H1 (cell line): ENCODE measurements at regions of chr19 and their contacts with region 1.

Region 1: DNA sequence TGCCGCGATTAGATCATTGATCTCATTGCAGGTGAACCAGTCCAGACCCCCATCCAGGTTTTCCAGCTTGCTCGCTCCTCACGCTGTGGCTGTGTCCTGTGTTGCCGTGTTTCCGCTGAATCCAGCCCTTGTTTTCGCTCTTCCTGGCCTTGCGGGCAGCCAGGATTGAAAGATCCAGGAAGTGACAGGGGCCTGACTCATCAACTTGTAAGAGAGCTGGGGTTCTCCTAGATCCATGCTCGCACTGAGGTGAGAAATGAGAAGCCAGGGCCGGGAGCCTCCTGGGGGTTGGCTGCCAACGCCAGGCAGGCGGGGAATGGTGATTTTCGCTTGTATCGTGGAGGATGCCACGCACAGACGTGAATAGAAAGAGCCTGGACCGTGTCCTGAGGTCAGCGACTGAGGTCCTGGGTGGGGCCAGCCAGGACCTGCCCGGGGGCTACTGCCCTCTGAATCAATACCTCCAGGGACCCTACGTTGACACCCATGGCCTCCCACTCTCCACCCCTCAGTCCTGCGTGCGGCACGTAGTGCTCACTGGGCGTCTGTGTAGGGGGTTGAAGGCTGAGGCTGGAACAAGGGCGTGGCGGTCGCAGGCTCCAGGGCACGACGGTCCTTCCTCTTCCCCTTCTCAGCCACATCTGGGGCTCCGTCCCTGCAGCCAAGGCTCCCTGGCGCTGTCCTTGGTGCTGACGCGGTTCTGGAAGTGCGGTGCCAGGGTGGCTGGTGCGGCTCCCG is 7.3 kb upstream of the PTPRH start:
- DNase-seq: peak; percentile 84 to 96
- H3K4me3 ChIP-seq: peak overlapping the region; percentile 56 to 83 (median 74)
- H3K27ac ChIP-seq: no peak overlapping the region
- H3K4me1 ChIP-seq: peaks cover 0 to 6% (median 2%) of the 10 kb centered on the region in 4 experiments; a peak in 1 of 7 replicates
- H3K27me3 ChIP-seq: no peaks in the 10 kb centered on the region
- CTCF ChIP-seq: no peak
- EP300 ChIP-seq: peak in 1 of 2 experiments; percentile 86; a peak in 2 of 3 replicates
- POLR2A ChIP-seq: peak in 1 of 2 experiments; percentile 51; a peak in 1 of 3 replicates
- RAD21 ChIP-seq: peak; percentile 24 to 37; a peak in 2 of 4 replicates

Region 2: DNA sequence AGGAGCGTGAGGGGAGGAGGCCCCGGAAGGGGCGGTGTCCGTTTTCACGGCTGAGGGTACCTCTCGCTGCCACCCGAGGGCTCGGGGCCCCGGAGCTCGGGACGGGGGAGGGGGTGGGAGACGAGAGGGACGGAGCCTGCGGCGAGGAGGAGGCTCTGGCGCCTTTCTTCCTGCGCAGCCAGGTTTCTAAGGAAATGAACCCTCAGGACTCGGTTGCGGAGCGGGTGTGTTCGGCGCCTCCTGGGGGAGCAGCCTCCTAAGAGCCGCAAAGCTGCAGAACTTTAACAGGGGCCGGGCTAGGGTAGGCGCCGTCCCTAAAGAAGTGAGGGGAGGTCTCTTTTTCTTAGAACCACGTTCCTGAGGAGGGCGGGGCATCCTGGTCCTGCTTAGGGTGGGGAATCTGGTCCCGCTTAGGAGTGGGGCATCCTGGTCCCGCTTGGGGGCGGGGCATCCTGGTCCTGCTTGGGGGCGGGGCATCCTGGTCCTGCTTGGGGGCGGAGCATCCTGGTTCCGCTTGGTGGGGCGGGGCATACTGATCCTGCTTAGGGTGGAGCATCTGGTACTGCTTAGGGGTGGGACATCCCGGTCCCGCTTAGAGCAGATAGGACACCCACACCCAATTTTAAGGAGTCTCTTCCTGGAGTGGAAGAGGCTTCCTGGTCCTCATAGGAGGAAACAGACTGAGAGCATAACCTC is 42.8 kb before region 1 on chr19:
- CTCF ChIA-PET with region 1: interaction called, 5 read pairs
- POLR2A ChIA-PET with region 1: interaction called, 16 read pairs
- DNase-seq: peak in 1 of 2 experiments; percentile 99
- H3K4me3 ChIP-seq: peak overlapping the region; percentile 60 to 77 (median 73)
- H3K27ac ChIP-seq: no peak overlapping the region
- H3K4me1 ChIP-seq: peaks cover 5 to 21% (median 14%) of the 10 kb centered on the region in 4 experiments
- H3K27me3 ChIP-seq: peaks cover 2 to 51% (median 28%) of the 10 kb centered on the region in 4 experiments; a peak in 6 of 7 replicates
- CTCF ChIP-seq: peak in 1 of 3 experiments; percentile 0; a peak in 1 of 4 replicates
- EP300 ChIP-seq: no peak
- POLR2A ChIP-seq: no peak
- RAD21 ChIP-seq: no peak

Region 3: DNA sequence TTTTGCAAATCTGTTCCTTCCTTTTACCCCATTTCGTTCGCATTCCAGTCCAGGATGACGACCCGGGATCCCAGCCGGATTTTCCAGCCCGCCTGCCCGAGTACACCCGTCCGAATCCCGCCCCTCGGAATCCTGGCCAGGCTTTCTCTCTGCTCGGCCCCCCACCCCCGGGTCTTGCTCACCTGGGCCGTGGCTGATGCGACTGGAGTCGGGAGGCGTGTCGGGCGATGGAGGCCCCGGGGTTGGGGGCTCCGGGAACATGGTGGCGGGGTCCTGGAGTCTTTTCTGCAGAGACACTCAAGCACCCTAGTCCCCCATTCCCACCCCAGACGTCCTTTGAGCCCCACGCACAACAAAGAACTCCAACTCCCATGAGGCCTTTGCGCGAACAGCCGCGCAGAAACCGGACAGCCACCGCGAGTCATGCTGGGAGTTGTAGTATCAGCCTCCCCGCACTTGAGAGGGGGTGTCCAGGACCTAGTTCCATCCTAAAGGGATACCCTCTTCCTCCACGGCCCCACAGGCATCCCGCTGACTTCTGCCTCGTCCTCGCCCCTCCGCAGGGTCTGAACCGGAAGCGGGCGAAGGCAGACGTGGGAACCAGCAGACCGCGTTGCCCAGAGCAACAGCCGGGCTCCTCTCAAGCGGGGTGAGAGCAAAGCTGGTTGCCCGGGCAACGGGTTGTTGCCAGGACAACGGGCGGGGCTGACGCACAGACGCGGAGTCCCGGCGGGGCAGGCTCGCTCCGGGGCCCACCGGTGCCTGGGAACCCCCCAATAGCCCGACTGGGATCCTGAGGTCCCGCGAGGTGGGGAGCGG is 37.6 kb before region 1 on chr19:
- CTCF ChIA-PET with region 1: interaction called, 5 read pairs
- POLR2A ChIA-PET with region 1: interaction called, 16 read pairs
- DNase-seq: peak in 1 of 2 experiments; percentile 95
- H3K4me3 ChIP-seq: peak overlapping the region; percentile 39 to 73 (median 72)
- H3K27ac ChIP-seq: 0 out of 2 replicates have a peak overlapping the region, but pooled peaks have one; percentile 25
- H3K4me1 ChIP-seq: peaks cover 2 to 22% (median 14%) of the 10 kb centered on the region in 4 experiments
- H3K27me3 ChIP-seq: peaks cover 2 to 46% (median 32%) of the 10 kb centered on the region in 4 experiments; a peak in 6 of 7 replicates
- CTCF ChIP-seq: no peak
- EP300 ChIP-seq: peak in 1 of 2 experiments; percentile 69; a peak in 1 of 3 replicates
- POLR2A ChIP-seq: no peak
- RAD21 ChIP-seq: peak; percentile 7 to 8; a peak in 1 of 4 replicates